ENCODE measurements at regions of chr7 and their contacts with region 1.

Region 1: DNA sequence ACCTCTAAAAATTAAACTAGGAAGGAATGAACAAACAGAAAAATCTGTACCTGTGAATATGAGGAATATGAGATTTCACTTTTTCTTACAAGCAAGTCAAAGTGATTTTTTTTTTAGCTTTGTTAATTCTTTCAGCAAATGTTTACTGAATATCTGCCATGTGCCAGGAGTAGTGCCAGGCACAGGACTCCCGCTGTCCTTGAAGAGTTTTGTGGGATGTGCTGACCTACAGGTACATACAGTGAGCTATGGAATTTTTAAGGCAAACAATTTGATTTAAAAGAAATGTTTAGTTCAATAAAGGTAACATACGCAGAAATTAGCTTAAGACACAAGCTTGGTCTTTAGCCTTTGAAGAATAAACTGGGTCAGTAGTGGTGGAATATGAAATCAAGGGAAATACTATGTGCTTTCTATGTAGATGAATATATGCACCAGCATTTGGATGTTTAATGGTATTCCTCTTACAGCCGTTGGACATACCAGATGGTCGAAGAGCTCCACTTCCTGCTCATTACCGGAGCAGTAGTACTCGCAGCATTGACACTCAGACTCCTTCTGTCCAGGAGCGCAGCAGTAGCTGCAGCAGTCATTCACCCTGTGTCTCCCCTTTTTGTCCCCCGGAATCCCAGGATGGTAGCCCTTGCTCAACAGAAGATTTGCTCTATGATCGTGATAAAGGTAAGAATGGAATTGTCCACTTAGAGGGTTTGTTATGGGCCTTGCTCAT is 102.0 kb downstream of the GLCCI1 start:
- DNase-seq: no peak
- H3K4me3 ChIP-seq: no peak overlapping the region
- H3K27ac ChIP-seq: no peak overlapping the region
- H3K4me1 ChIP-seq: no peaks in the 10 kb centered on the region
- CTCF ChIP-seq: no peak

Region 2: GRCh38 chr7:8058852-8059251 is 11.8 kb before region 1 on chr7:
- CTCF ChIA-PET with region 1: no interaction called
- POLR2A ChIA-PET with region 1: no interaction called
- intact Hi-C with region 1: loop called (anchors 1 kb)
- DNase-seq: no peak
- H3K4me3 ChIP-seq: no peak overlapping the region
- H3K27ac ChIP-seq: no peak overlapping the region
- H3K4me1 ChIP-seq: no peaks in the 10 kb centered on the region
- CTCF ChIP-seq: no peak

Region 3: GRCh38 chr7:8084836-8085235 is 14.2 kb after region 1 on chr7:
- CTCF ChIA-PET with region 1: no interaction called
- POLR2A ChIA-PET with region 1: interaction called, 19 read pairs
- intact Hi-C with region 1: no loop called
- DNase-seq: no peak
- H3K4me3 ChIP-seq: no peak overlapping the region
- H3K27ac ChIP-seq: no peak overlapping the region
- H3K4me1 ChIP-seq: no peaks in the 10 kb centered on the region
- CTCF ChIP-seq: no peak

Region 4: DNA sequence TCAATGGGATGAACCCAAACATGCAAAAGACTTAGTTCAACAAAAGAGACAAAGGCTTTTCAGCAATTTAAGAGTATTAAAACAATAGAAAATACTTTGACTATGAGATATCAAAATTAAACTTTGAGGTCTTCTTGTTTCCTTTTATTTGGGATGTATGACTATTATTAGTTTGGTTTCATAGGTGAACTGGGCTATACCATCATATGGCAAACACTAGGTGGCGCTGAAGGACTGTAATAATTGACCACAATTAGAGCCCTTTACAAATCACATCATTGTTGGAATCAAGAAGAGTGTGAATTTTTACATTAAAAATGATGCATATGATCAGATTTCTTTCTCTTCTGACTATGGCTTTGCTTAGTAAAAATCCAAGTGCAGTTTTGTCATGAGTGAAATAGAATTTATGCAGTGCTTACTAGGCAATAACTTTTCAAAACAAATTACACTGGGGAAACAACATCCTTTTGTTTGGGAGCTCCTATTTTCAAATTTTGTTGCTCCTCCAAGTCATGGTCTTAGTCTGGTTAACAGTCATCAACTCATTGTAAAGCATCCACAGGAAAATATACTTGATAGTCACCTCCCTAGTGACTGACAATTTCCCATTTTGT is 348.1 kb after region 1 on chr7:
- CTCF ChIA-PET with region 1: no interaction called
- POLR2A ChIA-PET with region 1: no interaction called
- intact Hi-C with region 1: no loop called
- DNase-seq: peak; percentile 65
- H3K4me3 ChIP-seq: no peak overlapping the region
- H3K27ac ChIP-seq: no peak overlapping the region
- H3K4me1 ChIP-seq: no peaks in the 10 kb centered on the region
- CTCF ChIP-seq: peak; percentile 97